PC-9 (cell line): ENCODE measurements at regions of chr7 and their contacts with region 1.

Region 1: GRCh38 chr7:96321658-96322372 is at the start of gene SLC25A13:
- DNase-seq: peak; percentile 82 to 96
- H3K4me3 ChIP-seq: peak within 1 kb of the TSS; percentile 74
- H3K27ac ChIP-seq: peak within 1 kb of the TSS; percentile 79
- H3K4me1 ChIP-seq: peaks cover 33% of the 10 kb centered on the region
- H3K27me3 ChIP-seq: no peaks in the 10 kb centered on the region
- CTCF ChIP-seq: no peak; the same call in 1 of the 2 replicates
- total RNA-seq, gene SLC25A13: 26.4 and 52.5 TPM in 2 replicates

Region 2: DNA sequence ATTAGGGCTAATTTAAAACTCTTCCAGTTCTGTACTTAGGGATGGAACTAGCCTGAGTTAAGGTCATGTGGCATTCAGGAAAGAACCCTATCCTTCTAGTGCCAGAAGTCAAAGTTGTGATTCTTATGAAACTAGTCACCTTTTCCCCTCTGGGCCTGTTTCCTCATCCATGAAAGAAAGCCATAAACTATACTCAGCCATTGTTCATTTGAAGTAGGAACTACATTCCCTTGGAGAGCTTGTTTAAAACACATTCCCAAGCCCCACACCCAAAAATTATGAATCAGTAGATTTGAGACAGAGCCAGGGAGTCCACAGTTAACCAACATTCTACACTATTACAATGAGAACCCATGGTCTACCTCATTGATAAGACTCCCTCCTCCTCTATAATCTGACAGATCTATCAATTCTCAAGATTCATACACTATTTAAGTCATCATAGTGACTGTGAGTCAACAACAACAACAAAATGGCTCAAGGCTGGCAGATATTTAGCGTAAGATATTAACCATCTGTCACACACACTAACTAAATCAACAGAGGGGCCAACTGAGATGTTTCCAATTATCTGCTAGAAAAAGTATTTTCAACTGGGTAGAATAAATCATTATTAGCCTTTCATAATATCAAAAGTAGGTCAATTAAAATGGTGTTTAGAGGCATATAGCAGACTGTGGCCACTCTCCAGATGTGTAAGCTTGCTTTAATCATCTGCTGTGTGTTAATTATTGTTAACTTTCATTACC is 102.3 kb before region 1 on chr7:
- CTCF ChIA-PET with region 1: no interaction called
- POLR2A ChIA-PET with region 1: interaction called, 4 read pairs
- intact Hi-C with region 1: loop called (anchors 1 kb)
- DNase-seq: peak; percentile 41 to 95
- H3K4me3 ChIP-seq: no peak overlapping the region
- H3K27ac ChIP-seq: peak overlapping the region; percentile 77
- H3K4me1 ChIP-seq: peaks cover 41% of the 10 kb centered on the region
- H3K27me3 ChIP-seq: no peaks in the 10 kb centered on the region
- CTCF ChIP-seq: no peak

Region 3: GRCh38 chr7:96236198-96237039 is 85.4 kb before region 1 on chr7:
- CTCF ChIA-PET with region 1: no interaction called
- POLR2A ChIA-PET with region 1: no interaction called
- intact Hi-C with region 1: no loop called
- DNase-seq: no peak
- H3K4me3 ChIP-seq: no peak overlapping the region
- H3K27ac ChIP-seq: no peak overlapping the region
- H3K4me1 ChIP-seq: no peaks in the 10 kb centered on the region
- H3K27me3 ChIP-seq: no peaks in the 10 kb centered on the region
- CTCF ChIP-seq: no peak

Region 4: DNA sequence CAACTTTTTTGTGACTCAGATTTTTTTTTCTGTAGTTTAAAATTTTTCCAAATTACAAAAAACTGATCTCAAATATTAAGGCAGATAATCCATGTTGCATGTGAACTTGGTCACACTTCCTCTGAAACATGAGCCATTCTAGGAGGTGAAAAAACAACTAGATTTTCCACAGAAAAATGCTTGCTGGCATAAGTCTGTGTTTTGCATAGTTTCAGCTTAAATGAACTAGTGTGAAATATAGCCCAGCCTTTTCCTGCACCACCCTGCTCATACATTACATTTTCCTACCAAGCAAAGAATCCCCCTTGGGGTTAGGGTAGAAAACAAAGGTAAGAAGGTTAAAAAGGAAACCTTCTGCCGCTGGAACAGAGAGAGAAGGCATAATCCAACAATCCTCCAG is 48.1 kb before region 1 on chr7:
- CTCF ChIA-PET with region 1: no interaction called
- POLR2A ChIA-PET with region 1: no interaction called
- intact Hi-C with region 1: no loop called
- DNase-seq: no peak
- H3K4me3 ChIP-seq: no peak overlapping the region
- H3K27ac ChIP-seq: no peak overlapping the region
- H3K4me1 ChIP-seq: no peaks in the 10 kb centered on the region
- H3K27me3 ChIP-seq: no peaks in the 10 kb centered on the region
- CTCF ChIP-seq: no peak

Region 5: GRCh38 chr7:96303686-96304443 is 17.9 kb before region 1 on chr7:
- CTCF ChIA-PET with region 1: no interaction called
- POLR2A ChIA-PET with region 1: no interaction called
- intact Hi-C with region 1: loop called (anchors 1 kb)
- DNase-seq: peak; percentile 2 to 94
- H3K4me3 ChIP-seq: no peak overlapping the region
- H3K27ac ChIP-seq: peak overlapping the region; percentile 76
- H3K4me1 ChIP-seq: peaks cover 41% of the 10 kb centered on the region
- H3K27me3 ChIP-seq: no peaks in the 10 kb centered on the region
- CTCF ChIP-seq: no peak

Region 6: DNA sequence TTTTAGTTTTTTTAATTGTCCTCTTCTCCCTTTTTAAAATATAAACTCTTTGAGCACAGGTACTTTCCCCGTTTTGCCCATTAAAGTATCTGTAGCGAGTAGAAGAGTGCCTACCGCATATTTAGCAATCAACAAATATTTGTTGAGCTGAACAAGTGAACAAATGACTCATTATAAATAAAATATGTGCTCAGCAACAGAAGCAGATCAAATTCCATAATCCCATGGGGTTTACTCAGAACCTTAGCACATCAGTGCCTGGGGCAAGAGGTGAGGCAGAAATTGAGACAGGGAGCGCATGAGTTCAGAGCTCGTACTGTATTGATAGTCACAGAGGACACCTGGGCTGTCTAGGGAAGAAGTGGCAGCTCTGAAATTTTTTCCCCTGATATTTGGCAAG is 226.8 kb after region 1 on chr7:
- CTCF ChIA-PET with region 1: no interaction called
- POLR2A ChIA-PET with region 1: no interaction called
- intact Hi-C with region 1: loop called (anchors 5 kb)
- DNase-seq: peak; percentile 84 to 98
- H3K4me3 ChIP-seq: no peak overlapping the region
- H3K27ac ChIP-seq: peak overlapping the region; percentile 52
- H3K4me1 ChIP-seq: peaks cover 35% of the 10 kb centered on the region
- H3K27me3 ChIP-seq: no peaks in the 10 kb centered on the region
- CTCF ChIP-seq: no peak

Region 7: GRCh38 chr7:96709381-96710228 is 387.8 kb after region 1 on chr7 and contains the start of gene SEM1:
- CTCF ChIA-PET with region 1: no interaction called
- POLR2A ChIA-PET with region 1: no interaction called
- intact Hi-C with region 1: loop called (anchors 5 kb)
- DNase-seq: peak; percentile 78 to 81
- H3K4me3 ChIP-seq: peak within 1 kb of the TSS; percentile 77
- H3K27ac ChIP-seq: peak within 1 kb of the TSS; percentile 83
- H3K4me1 ChIP-seq: peaks cover 20% of the 10 kb centered on the region
- H3K27me3 ChIP-seq: no peaks in the 10 kb centered on the region
- CTCF ChIP-seq: no peak
- total RNA-seq, gene SEM1: 108 and 131 TPM in 2 replicates